Spleen (tissue), 13 donors: ENCODE measurements at regions of chr7 and their contacts with region 1.

Region 1: GRCh38 chr7:99374103-99375064 is at the start of gene ARPC1B:
- DNase-seq: peak; percentile 98
- H3K4me3 ChIP-seq: peak within 1 kb of the TSS; percentile 88 to 100 (median 96)
- H3K27ac ChIP-seq: peak within 1 kb of the TSS; percentile 89 to 99 (median 94)
- H3K4me1 ChIP-seq: peaks cover 30 to 65% (median 55%) of the 10 kb centered on the region in 6 donors
- H3K27me3 ChIP-seq: no peaks in the 10 kb centered on the region
- CTCF ChIP-seq: no peak
- POLR2A ChIP-seq: peak in 2 of 3 donors; percentile 64 to 66
- total RNA-seq, gene ARPC1B: 302 to 758 (median 363) TPM

Region 2: GRCh38 chr7:99244939-99245338 is 129.4 kb before region 1 on chr7:
- intact Hi-C with region 1: no loop called
- DNase-seq: no peak
- H3K4me3 ChIP-seq: no peak overlapping the region
- H3K27ac ChIP-seq: no peak overlapping the region
- H3K4me1 ChIP-seq: no peaks in the 10 kb centered on the region
- H3K27me3 ChIP-seq: peaks cover 0 to 12% (median 0%) of the 10 kb centered on the region in 7 donors
- CTCF ChIP-seq: no peak
- POLR2A ChIP-seq: no peak

Region 3: DNA sequence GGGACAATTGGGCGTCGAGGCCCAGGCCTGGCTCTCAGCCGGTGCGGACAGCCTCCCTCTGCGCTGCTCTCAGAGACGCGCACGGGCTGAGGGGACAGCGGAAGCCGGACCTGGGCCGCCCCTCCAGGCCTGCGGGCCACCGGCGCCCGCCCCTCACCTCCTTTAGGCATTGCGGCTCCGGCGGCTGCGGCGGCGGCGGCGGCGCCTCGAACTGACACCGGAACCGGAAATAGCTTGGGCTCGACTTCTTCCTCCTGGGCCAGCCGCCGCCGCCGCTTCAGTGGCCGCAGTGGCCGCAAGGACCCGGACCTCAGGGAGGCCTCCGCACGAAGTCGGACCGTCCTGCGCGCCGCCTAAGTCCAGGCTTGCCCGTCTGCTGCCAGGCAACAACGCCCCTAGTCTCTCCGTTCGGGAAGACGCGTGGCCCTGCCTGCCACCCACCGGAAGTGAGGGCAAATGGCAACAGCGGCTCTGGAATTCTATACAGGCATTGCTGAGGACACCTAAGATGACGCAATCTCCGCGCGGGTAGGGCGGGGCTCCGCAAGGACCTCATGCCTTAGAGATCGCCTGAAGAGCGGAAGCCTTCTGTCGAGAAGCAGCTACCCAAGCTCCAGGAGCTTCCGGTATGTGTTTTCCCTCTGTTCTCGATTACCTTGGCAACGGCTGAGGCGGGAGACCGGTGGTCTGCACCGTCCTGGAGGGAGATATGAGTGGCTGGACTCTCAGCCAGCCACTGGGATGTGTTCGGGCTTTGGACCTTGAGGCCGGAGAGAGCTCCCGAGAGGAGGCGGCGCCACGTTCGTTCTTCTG is 34.2 kb after region 1 on chr7 and contains the starts of genes BUD31 and PDAP1:
- intact Hi-C with region 1: loop called (anchors 5 kb)
- DNase-seq: peak; percentile 97
- H3K4me3 ChIP-seq: peak within 1 kb of the TSS; percentile 91 to 100 (median 96)
- H3K27ac ChIP-seq: peak within 1 kb of the TSS; percentile 92 to 98 (median 96)
- H3K4me1 ChIP-seq: peaks cover 32 to 78% (median 53%) of the 10 kb centered on the region in 6 donors
- H3K27me3 ChIP-seq: no peaks in the 10 kb centered on the region
- CTCF ChIP-seq: peak in 8 of 11 experiments; percentile 11 to 49 (median 37)
- POLR2A ChIP-seq: peak in 2 of 3 donors; percentile 32 to 39
- total RNA-seq, gene BUD31: 48.4 to 72.7 (median 65.7) TPM
- total RNA-seq, gene PDAP1: 28.1 to 57.2 (median 52.8) TPM